Heart right ventricle (tissue), 16 donors: ENCODE measurements at regions of chr11 and their contacts with region 1.

Region 1: GRCh38 chr11:114110952-114111947 is 51.7 kb downstream of the ZBTB16 start:
- DNase-seq: peak; percentile 40 to 58
- ATAC-seq: peak in 7 of 8 donors; percentile 35 to 72 (median 57)
- H3K4me3 ChIP-seq: peak overlapping the region in 8 of 10 donors; percentile 3 to 40 (median 32)
- H3K27ac ChIP-seq: peak overlapping the region; percentile 50 to 85 (median 75)
- H3K4me1 ChIP-seq: peaks cover 34 to 97% (median 85%) of the 10 kb centered on the region in 9 donors
- H3K27me3 ChIP-seq: no peaks in the 10 kb centered on the region
- CTCF ChIP-seq: peak in 2 of 9 donors; percentile 17 to 19

Region 2: DNA sequence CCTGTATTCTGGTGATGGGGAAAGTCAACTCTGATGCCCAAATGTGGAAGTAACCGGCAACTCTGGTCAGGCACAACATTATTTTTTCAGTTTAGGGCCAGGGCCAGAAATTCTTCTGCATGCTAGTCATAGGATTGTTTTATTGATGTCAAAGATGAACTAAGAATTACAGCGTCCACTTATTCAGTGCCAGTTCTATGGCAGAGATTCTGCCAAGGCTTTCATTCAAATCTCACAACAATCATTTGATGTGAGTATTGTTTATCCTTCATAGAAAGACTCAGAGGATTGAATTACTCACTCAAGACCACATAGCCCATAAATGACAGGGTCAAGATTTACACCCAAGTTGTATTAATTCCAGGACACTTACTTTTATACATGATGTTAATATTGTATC is 492.9 kb before region 1 on chr11:
- intact Hi-C with region 1: no loop called
- DNase-seq: no peak
- ATAC-seq: no peak
- H3K4me3 ChIP-seq: no peak overlapping the region
- H3K27ac ChIP-seq: no peak overlapping the region
- H3K4me1 ChIP-seq: peaks cover 0 to 10% (median 0%) of the 10 kb centered on the region in 9 donors
- H3K27me3 ChIP-seq: no peaks in the 10 kb centered on the region
- CTCF ChIP-seq: no peak

Region 3: GRCh38 chr11:114017723-114018122 is 93.5 kb before region 1 on chr11:
- intact Hi-C with region 1: no loop called
- DNase-seq: no peak
- ATAC-seq: peak in 4 of 8 donors; percentile 52 to 69 (median 56)
- H3K4me3 ChIP-seq: no peak overlapping the region
- H3K27ac ChIP-seq: no peak overlapping the region
- H3K4me1 ChIP-seq: peaks cover 0 to 6% (median 0%) of the 10 kb centered on the region in 9 donors
- H3K27me3 ChIP-seq: peaks cover 0 to 4% (median 0%) of the 10 kb centered on the region in 7 donors
- CTCF ChIP-seq: no peak

Region 4: DNA sequence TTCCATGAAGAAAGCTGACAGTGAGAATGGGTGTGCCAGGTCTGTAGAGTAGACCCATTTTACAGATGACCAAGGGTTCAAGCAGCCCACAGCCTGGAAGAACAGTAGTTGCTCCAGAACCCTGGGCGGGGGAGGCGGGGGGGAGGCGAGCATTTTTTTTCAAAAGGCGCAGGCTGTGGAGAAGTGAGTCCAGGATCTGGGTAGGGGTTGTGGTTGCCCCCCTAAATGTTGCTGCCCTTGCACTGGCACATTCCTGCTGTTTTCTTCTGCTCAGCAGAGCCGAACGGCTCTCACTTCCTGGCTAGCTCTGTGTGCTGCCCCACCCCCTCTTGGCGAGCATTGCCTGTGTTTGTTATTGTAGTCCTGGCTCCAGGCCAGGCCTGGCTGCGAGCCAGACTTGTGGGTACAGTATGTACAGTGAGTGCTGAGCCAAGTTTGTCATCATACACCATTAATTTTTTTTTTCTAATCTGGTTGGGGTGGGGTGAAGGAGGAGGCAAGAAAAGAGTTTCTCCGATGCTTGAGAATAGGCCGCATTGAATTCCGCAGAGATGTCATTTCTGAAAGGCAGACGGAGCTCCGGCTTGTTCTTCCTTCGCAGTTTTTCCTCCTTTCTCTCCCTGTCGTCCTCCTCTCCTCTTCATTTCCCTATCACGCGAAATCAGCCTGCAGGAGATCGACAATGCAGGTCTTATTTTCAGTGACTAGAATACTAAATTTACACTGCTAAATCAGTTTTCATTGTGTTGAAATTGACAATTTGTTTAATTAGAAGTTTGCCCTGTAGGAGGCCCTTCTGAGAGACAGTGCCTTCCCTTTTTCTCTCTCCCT is 48.8 kb after region 1 on chr11:
- intact Hi-C with region 1: loop called in 2 of 10 experiments (anchors 2 kb)
- DNase-seq: peak; percentile 99
- ATAC-seq: peak; percentile 61 to 92 (median 84)
- H3K4me3 ChIP-seq: peak overlapping the region in 9 of 10 donors; percentile 1 to 47 (median 32)
- H3K27ac ChIP-seq: peak overlapping the region; percentile 87 to 100 (median 97)
- H3K4me1 ChIP-seq: peaks cover 79 to 99% (median 95%) of the 10 kb centered on the region in 9 donors
- H3K27me3 ChIP-seq: no peaks in the 10 kb centered on the region
- CTCF ChIP-seq: no peak

Region 5: DNA sequence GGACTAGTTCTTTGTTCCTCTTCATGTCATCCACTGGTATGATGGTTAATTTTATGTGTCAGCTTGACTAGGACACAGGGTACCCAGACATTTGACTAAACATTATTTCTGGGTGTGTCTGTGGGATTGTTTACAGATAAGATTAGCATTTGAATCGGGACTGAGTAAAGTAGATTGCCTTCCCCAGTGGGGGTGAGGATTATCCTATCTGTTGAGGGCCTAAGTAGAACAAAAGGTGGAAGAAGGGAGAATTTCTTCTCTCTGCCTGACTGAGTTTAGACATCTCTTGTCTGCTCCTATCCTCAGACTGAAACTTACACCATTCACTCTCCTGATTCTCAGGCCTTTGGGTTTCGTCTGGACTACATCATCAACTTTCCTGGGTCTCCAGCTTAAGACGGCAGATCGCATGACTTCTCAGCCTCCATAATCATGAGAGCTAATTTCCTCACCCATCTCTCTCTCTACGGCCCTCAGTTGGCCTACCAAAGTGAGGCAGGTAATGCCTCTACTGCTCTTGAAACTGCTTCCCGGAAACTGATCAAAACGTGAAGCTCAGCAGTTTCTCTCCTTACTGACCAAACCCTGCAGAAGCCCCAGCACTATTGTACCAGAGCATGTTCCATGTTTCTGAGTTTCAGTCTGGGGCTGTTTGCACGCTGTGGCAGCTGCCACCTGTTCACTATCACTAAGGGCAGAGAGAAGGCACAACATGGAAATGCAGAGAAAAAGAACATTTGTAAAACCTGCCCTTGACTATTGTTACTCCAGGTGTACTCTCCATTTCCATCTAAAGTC is 662.5 kb after region 1 on chr11:
- intact Hi-C with region 1: no loop called
- DNase-seq: no peak
- ATAC-seq: no peak
- H3K4me3 ChIP-seq: no peak overlapping the region
- H3K27ac ChIP-seq: no peak overlapping the region
- H3K4me1 ChIP-seq: peaks cover 0 to 14% (median 7%) of the 10 kb centered on the region in 9 donors
- H3K27me3 ChIP-seq: peaks cover 0 to 14% (median 0%) of the 10 kb centered on the region in 7 donors
- CTCF ChIP-seq: no peak